GM23248 (cell line): ENCODE measurements at regions of chr18 and their contacts with region 1.

Region 1: GRCh38 chr18:22813648-22814328 is 119.3 kb upstream of the RBBP8 start:
- DNase-seq: peak; percentile 71
- H3K4me3 ChIP-seq: no peak overlapping the region
- H3K27ac ChIP-seq: no peak overlapping the region
- H3K4me1 ChIP-seq: no peaks in the 10 kb centered on the region
- H3K27me3 ChIP-seq: no peaks in the 10 kb centered on the region

Region 2: GRCh38 chr18:22983175-22983574 is 169.4 kb after region 1 on chr18:
- in situ Hi-C with region 1: loop called (anchors 10 kb)
- DNase-seq: peak; percentile 79
- H3K4me3 ChIP-seq: no peak overlapping the region
- H3K27ac ChIP-seq: no peak overlapping the region
- H3K4me1 ChIP-seq: peaks cover 7% of the 10 kb centered on the region
- H3K27me3 ChIP-seq: no peaks in the 10 kb centered on the region

Region 3: GRCh38 chr18:23422672-23423418 is 609.1 kb after region 1 on chr18:
- in situ Hi-C with region 1: loop called (anchors 25 kb)
- DNase-seq: peak; percentile 83
- H3K4me3 ChIP-seq: no peak overlapping the region
- H3K27ac ChIP-seq: no peak overlapping the region
- H3K4me1 ChIP-seq: peaks cover 9% of the 10 kb centered on the region
- H3K27me3 ChIP-seq: no peaks in the 10 kb centered on the region